Heart right ventricle (tissue), 16 donors: ENCODE measurements at regions of chr3 and their contacts with region 1.

Region 1: GRCh38 chr3:133927540-133928066 is 31.9 kb upstream of the RAB6B start:
- DNase-seq: peak; percentile 50 to 73
- ATAC-seq: peak; percentile 74 to 91 (median 78)
- H3K4me3 ChIP-seq: peak overlapping the region; percentile 9 to 73 (median 59)
- H3K27ac ChIP-seq: peak overlapping the region in 2 of 10 donors; percentile 12 to 30
- H3K4me1 ChIP-seq: peaks cover 3 to 12% (median 9%) of the 10 kb centered on the region in 9 donors
- H3K27me3 ChIP-seq: peaks cover 0 to 10% (median 0%) of the 10 kb centered on the region in 7 donors
- CTCF ChIP-seq: peak; percentile 65 to 96 (median 79)

Region 2: DNA sequence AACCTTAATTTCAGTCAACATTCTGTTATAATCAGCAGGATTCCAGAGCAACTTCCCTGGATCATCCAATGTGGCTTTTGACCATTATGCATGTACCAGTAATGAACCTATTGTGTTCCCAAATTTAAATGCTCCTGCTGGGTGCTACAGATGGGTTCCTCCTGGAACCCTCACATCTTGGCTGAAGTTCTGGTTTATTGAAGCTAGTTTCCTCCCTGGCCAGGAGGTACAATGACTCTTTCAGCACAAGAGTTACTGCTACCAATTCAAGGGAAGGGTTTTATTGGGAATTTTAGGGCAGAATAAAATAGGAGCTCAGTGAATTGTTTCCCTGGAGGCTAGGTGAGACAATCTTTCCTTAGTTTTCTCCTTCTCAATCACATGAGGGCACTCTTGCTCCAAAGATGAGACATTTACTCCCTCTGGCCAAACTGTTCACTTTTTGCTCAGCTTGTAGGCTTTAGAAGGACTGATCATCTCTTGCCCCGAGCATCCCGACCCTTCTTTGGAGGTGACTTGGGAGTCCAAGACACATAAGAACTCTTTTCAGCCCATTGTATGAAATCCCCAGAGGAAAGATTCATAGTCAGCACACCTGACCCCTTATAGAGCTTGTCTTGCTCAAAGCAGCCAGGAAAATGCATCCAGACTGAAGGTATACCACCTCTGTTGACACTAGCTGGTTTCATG is 1196.6 kb before region 1 on chr3:
- intact Hi-C with region 1: loop called in 1 of 10 experiments (anchors 10 kb)
- DNase-seq: peak in 1 of 2 donors; percentile 21
- ATAC-seq: peak; percentile 59 to 83 (median 75)
- H3K4me3 ChIP-seq: no peak overlapping the region
- H3K27ac ChIP-seq: no peak overlapping the region
- H3K4me1 ChIP-seq: peaks cover 0 to 5% (median 0%) of the 10 kb centered on the region in 9 donors
- H3K27me3 ChIP-seq: peaks cover 0 to 20% (median 0%) of the 10 kb centered on the region in 7 donors
- CTCF ChIP-seq: peak in 8 of 9 donors; percentile 17 to 64 (median 50)

Region 3: DNA sequence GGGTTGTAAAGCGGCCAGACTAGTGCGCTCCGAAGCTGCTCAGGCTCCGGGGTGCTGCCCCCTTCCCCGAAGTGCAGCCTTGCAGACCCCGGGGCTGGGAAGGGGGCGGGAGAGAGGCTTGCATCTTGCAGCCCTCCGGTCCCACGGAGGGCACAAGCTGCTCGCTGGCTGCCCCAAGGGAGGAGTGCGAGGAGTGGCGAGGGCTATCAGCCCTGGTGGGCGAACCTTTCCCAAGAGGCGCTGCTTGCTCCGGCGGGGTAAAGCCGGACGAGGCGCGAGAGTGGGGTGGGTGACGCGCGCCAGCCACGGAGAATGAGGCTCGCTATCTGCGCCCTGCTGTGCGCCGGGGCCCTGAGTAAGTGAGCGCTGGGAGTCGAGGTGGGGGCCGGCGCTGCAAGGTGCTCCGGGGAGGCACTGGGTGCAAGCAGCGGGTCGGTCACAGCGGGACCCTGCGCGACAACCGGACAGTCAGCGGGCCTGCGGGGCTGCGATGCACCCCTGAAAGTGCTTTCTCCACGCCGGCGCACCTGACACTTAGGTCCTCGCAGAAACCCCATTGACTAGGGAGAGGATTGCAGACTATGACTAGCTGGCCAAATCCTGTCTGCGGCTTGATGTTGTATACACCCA is 253.2 kb before region 1 on chr3:
- intact Hi-C with region 1: loop called in 4 of 10 experiments (anchors 10 kb)
- DNase-seq: no peak
- ATAC-seq: peak in 4 of 8 donors; percentile 19 to 55 (median 43)
- H3K4me3 ChIP-seq: peak overlapping the region in 9 of 10 donors; percentile 5 to 44 (median 31)
- H3K27ac ChIP-seq: no peak overlapping the region
- H3K4me1 ChIP-seq: peaks cover 0 to 7% (median 4%) of the 10 kb centered on the region in 9 donors
- H3K27me3 ChIP-seq: peaks cover 0 to 54% (median 32%) of the 10 kb centered on the region in 7 donors
- CTCF ChIP-seq: no peak

Region 4: GRCh38 chr3:133821767-133822638 is 105.6 kb before region 1 on chr3:
- intact Hi-C with region 1: loop called in 9 of 10 experiments (anchors 1 to 5 kb)
- DNase-seq: peak in 1 of 2 donors; percentile 87
- ATAC-seq: peak in 7 of 8 donors; percentile 35 to 83 (median 65)
- H3K4me3 ChIP-seq: no peak overlapping the region
- H3K27ac ChIP-seq: peak overlapping the region in 1 of 10 donors; percentile 58
- H3K4me1 ChIP-seq: peaks cover 0 to 17% (median 5%) of the 10 kb centered on the region in 9 donors
- H3K27me3 ChIP-seq: no peaks in the 10 kb centered on the region
- CTCF ChIP-seq: peak in 5 of 9 donors; percentile 28 to 62 (median 43)

Region 5: GRCh38 chr3:134197681-134198261 is 270.2 kb after region 1 on chr3:
- intact Hi-C with region 1: loop called in 3 of 10 experiments (anchors 5 to 10 kb)
- DNase-seq: peak in 1 of 2 donors; percentile 35
- ATAC-seq: peak in 7 of 8 donors; percentile 51 to 88 (median 71)
- H3K4me3 ChIP-seq: no peak overlapping the region
- H3K27ac ChIP-seq: no peak overlapping the region
- H3K4me1 ChIP-seq: peaks cover 0 to 7% (median 0%) of the 10 kb centered on the region in 9 donors
- H3K27me3 ChIP-seq: no peaks in the 10 kb centered on the region
- CTCF ChIP-seq: peak; percentile 45 to 81 (median 74)

Region 6: DNA sequence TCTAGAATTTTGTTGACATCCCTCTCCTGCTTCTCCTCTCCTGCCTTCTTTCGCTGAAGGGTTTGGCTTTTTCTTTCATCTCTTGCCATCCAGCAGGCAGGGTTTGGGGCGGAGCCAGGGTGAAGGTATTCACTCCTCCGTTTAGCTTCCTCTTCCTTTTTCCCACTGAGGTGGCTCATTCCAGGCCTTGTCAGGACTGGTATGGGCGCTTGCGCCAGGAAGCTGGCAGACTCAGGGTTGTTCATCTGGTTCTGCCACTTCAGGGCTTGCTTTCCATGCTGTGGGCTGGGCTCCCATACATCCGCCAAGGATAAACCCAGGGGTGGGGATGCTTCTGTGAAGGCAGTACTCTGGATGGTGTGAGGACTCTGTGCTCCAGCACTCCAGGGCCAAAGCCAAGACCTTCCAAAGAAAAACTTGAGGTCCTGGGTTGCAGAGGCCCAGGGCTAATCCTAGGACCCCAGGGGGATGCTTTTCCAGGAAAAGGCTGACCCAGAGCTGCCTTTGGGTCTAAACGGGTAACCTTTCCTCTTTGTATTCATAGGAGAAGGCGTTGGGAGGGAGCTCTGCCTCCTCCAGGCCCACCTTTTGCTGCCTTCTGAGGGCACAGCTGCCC is 454.3 kb after region 1 on chr3:
- intact Hi-C with region 1: loop called in 1 of 10 experiments (anchors 10 kb)
- DNase-seq: no peak
- ATAC-seq: no peak
- H3K4me3 ChIP-seq: no peak overlapping the region
- H3K27ac ChIP-seq: peak overlapping the region in 1 of 10 donors; percentile 49
- H3K4me1 ChIP-seq: peaks cover 2 to 16% (median 7%) of the 10 kb centered on the region in 9 donors
- H3K27me3 ChIP-seq: no peaks in the 10 kb centered on the region
- CTCF ChIP-seq: no peak